GM12878 (cell line): ENCODE measurements at regions of chr4 and their contacts with region 1.

Region 1: GRCh38 chr4:6873792-6874461 is 35.7 kb upstream of the TBC1D14 start:
- DNase-seq: no peak
- ATAC-seq: peak; percentile 96
- H3K4me3 ChIP-seq: no peak overlapping the region
- H3K27ac ChIP-seq: no peak overlapping the region
- H3K4me1 ChIP-seq: no peaks in the 10 kb centered on the region
- H3K27me3 ChIP-seq: no peaks in the 10 kb centered on the region
- CTCF ChIP-seq: peak; percentile 92 to 95 (median 95)
- EP300 ChIP-seq: no peak
- POLR2A ChIP-seq: no peak
- RAD21 ChIP-seq: peak; percentile 96

Region 2: DNA sequence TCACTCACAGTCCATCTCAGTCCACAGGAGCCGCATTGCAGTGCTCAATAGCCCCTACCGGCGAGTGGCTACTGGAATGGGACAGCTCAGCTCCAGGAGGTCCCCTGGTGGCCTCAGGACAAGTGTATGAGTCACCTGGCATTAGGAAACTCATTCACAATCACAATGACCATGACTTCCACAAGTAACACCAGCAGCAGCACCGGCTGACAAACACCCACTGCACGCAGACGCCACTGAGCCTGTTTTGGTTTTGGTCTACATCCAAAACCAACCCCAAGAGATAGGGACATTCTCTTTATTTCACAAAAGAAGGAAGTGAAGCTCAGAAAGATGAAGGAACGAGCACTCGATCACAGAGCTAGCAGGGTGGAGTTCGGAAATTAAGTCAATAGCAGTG is 681.7 kb before region 1 on chr4:
- CTCF ChIA-PET with region 1: no interaction called
- POLR2A ChIA-PET with region 1: no interaction called
- RAD21 ChIA-PET with region 1: no interaction called
- SMC1A ChIA-PET with region 1: no interaction called
- in situ Hi-C with region 1: no loop called
- intact Hi-C with region 1: no loop called
- DNase-seq: no peak
- ATAC-seq: peak; percentile 37
- H3K4me3 ChIP-seq: no peak overlapping the region
- H3K27ac ChIP-seq: peak overlapping the region; percentile 50
- H3K4me1 ChIP-seq: peaks cover 30% of the 10 kb centered on the region
- H3K27me3 ChIP-seq: no peaks in the 10 kb centered on the region
- CTCF ChIP-seq: peak in 1 of 3 experiments; percentile 19; a peak in 1 of 6 replicates
- EP300 ChIP-seq: peak; percentile 39 to 53; a peak in 2 of 4 replicates
- POLR2A ChIP-seq: no peak
- RAD21 ChIP-seq: no peak

Region 3: DNA sequence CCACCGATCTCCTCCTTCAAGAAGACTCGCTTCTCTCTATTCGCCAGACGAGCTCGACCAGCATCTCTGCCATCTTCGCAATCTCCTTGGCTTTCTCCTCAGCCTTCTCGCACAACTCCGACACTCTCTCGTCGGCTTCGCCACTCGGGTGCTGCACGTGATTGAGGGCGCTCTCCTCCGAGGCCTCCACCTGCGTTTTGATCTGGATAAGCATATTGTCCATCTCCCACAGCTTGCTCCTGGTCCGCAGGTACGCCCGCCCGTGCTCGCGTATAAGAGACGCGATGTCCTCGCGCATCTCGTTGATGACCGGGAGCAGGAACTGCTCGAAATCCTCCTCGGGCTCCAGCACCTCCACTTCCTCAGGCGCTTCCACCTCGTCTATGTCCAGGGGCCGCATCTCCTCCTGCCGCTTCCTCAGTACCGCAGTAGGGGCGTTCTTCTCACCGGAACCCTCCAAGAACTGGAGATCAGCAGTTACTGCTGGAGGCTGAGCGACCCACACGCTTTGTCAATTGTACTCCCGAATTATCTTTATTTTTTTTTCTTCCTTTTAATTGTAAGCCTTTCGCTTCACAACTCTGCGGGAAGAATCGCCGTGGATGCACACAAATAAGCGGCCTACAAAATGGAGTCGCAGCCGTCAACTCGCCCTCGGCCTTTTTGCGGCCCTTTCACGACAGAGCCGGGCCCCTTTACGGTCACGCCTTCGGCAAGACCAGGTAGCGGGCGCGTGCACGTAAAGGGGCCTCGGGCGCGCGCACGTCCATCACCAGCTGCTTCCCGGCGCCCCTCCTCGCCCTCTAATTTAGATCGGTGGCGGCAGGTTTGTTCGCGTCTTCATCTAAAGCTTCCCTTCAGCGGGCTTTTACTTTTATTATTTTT is 164.5 kb before region 1 on chr4 and contains the start of gene MRFAP1L1:
- CTCF ChIA-PET with region 1: interaction called, 277 read pairs
- POLR2A ChIA-PET with region 1: interaction called, 3 read pairs
- RAD21 ChIA-PET with region 1: interaction called, 14 read pairs
- SMC1A ChIA-PET with region 1: interaction called, 9 read pairs
- in situ Hi-C with region 1: no loop called
- intact Hi-C with region 1: no loop called
- DNase-seq: peak; percentile 85
- ATAC-seq: peak; percentile 85
- H3K4me3 ChIP-seq: peak within 1 kb of the TSS; percentile 89
- H3K27ac ChIP-seq: peak within 1 kb of the TSS; percentile 81
- H3K4me1 ChIP-seq: peaks cover 14% of the 10 kb centered on the region
- H3K27me3 ChIP-seq: no peaks in the 10 kb centered on the region
- CTCF ChIP-seq: peak in 2 of 3 experiments; percentile 7 to 10; a peak in 1 of 6 replicates
- EP300 ChIP-seq: no peak
- POLR2A ChIP-seq: peak; percentile 80
- RAD21 ChIP-seq: no peak
- polyA plus RNA-seq, gene MRFAP1L1: 30.6 to 34.5 TPM

Region 4: GRCh38 chr4:6732441-6733357 is 141.2 kb before region 1 on chr4:
- CTCF ChIA-PET with region 1: interaction called, 13 read pairs
- POLR2A ChIA-PET with region 1: no interaction called
- RAD21 ChIA-PET with region 1: interaction called, 4 read pairs
- SMC1A ChIA-PET with region 1: interaction called, 10 read pairs
- in situ Hi-C with region 1: no loop called
- intact Hi-C with region 1: no loop called
- DNase-seq: no peak
- ATAC-seq: no peak
- H3K4me3 ChIP-seq: no peak overlapping the region
- H3K27ac ChIP-seq: no peak overlapping the region
- H3K4me1 ChIP-seq: no peaks in the 10 kb centered on the region
- H3K27me3 ChIP-seq: no peaks in the 10 kb centered on the region; a peak in 1 of 4 replicates
- CTCF ChIP-seq: no peak
- EP300 ChIP-seq: no peak
- POLR2A ChIP-seq: no peak
- RAD21 ChIP-seq: no peak

Region 5: DNA sequence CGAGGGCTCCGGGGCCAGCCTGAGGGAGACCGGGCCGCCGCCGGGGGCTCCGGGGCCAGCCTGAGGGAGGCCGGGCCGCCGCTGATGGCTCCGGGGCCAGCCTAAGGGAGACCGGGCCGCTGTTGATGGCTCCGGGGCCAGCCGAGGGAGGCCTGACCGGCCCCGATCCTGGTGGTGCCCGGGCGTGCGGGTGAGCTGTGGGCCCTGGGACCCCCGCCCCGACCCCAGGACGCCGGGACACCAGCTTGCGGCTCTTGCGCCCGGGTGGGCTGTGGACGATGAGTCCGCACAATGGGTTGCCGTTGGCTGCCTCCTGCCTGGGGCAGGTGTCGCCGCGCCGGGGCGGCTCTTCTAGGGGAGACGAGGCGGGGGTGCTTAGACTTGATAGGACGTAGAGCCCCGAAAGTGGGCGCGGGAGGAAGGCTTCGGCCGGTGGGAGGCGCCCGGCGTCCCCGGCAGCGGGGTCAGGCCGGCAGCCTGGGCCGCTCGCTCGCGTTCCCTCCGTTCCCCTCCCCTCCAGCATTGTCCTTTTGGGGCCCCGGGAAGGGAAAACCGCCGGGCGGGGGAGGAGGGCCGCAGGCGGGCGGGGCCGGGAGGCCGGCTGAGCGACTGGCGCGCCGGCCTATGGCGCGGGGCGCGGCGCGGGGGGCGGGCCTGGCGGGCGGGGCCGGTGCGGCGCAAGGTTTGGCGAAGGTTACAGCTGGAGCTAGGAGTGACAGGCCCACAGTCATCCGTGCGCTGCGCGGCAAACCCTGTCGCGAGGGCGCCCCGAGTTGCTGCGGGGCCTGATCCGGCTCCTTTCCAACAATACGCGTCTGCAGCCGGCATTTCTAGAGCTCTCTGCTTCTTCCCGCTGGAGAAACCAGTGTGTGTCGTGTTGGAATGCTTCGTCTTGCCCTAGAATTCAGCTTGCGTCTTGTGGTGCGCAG is 90.6 kb before region 1 on chr4:
- CTCF ChIA-PET with region 1: interaction called, 300 read pairs
- POLR2A ChIA-PET with region 1: interaction called, 3 read pairs
- RAD21 ChIA-PET with region 1: interaction called, 87 read pairs
- SMC1A ChIA-PET with region 1: interaction called, 110 read pairs
- in situ Hi-C with region 1: no loop called
- intact Hi-C with region 1: loop called (anchors 2 kb)
- DNase-seq: peak; percentile 27
- ATAC-seq: peak; percentile 87
- H3K4me3 ChIP-seq: peak overlapping the region; percentile 89
- H3K27ac ChIP-seq: peak overlapping the region; percentile 88
- H3K4me1 ChIP-seq: 0 out of 2 replicates have a peak, but pooled peaks cover 6% of the 10 kb centered on the region
- H3K27me3 ChIP-seq: no peaks in the 10 kb centered on the region
- CTCF ChIP-seq: peak; percentile 19 to 42 (median 25); a peak in 3 of 6 replicates
- EP300 ChIP-seq: no peak
- POLR2A ChIP-seq: peak; percentile 78; the same call in 1 of the 2 replicates
- RAD21 ChIP-seq: peak; percentile 15; the same call in 1 of the 2 replicates

Region 6: GRCh38 chr4:6848717-6849305 is 25.1 kb before region 1 on chr4:
- CTCF ChIA-PET with region 1: interaction called, 15 read pairs
- POLR2A ChIA-PET with region 1: interaction called, 3 read pairs
- RAD21 ChIA-PET with region 1: interaction called, 3 read pairs
- SMC1A ChIA-PET with region 1: interaction called, 10 read pairs
- in situ Hi-C with region 1: no loop called
- intact Hi-C with region 1: no loop called
- DNase-seq: no peak
- ATAC-seq: no peak; the same call in 2 of the 3 replicates
- H3K4me3 ChIP-seq: no peak overlapping the region
- H3K27ac ChIP-seq: no peak overlapping the region
- H3K4me1 ChIP-seq: peaks cover 5% of the 10 kb centered on the region
- H3K27me3 ChIP-seq: no peaks in the 10 kb centered on the region
- CTCF ChIP-seq: no peak
- EP300 ChIP-seq: no peak
- POLR2A ChIP-seq: no peak
- RAD21 ChIP-seq: no peak

Region 7: GRCh38 chr4:6892190-6892908 is 18.4 kb after region 1 on chr4:
- CTCF ChIA-PET with region 1: interaction called, 64 read pairs
- POLR2A ChIA-PET with region 1: no interaction called
- RAD21 ChIA-PET with region 1: interaction called, 13 read pairs
- SMC1A ChIA-PET with region 1: interaction called, 5 read pairs
- in situ Hi-C with region 1: no loop called
- intact Hi-C with region 1: no loop called
- DNase-seq: no peak
- ATAC-seq: peak; percentile 58
- H3K4me3 ChIP-seq: no peak overlapping the region
- H3K27ac ChIP-seq: no peak overlapping the region
- H3K4me1 ChIP-seq: peaks cover 11% of the 10 kb centered on the region
- H3K27me3 ChIP-seq: no peaks in the 10 kb centered on the region
- CTCF ChIP-seq: peak; percentile 1 to 22 (median 18); a peak in 2 of 6 replicates
- EP300 ChIP-seq: no peak
- POLR2A ChIP-seq: no peak
- RAD21 ChIP-seq: peak; percentile 8; the same call in 1 of the 2 replicates

Region 8: DNA sequence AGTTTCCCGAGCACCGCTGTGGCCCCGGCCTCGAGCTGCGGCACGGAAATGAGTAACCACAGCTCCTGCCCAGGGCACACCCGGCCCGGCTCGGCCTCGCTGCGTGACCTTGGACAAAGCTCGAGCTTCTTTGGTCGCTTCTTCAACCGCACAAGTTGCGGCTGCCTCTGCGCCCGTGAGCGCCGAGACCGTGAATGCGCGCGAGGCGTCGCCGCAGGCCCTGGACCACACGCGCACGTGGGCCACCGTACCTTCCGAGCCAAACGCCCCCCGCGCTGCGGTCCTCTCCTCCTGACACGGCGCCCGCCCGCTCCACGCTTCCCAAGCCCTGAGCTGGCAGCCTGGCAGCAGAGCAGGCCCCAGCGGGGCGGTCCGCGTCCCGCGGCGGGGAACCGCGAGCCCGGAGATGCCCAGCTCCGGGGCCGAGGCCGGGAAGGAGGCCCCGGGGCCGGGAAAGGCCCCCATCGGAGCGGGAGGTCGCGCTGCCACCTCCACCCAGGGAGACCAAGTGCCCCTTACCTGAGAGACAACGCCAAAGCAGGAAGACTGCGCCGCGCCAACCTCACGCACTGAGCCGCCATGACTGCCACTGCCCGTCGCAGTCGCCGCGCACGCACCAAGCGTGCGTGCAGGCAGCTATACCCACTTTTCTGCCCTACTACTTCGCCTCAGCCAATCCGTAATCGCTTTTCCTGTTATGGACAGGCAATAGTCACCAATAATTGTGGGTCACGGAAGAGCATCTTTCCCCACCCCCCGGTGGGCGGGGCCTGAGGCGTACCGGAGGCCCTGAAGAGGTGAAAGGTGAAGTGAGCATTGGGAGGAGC is 193.7 kb after region 1 on chr4 and contains the start of gene GRPEL1:
- CTCF ChIA-PET with region 1: interaction called, 22 read pairs
- POLR2A ChIA-PET with region 1: interaction called, 6 read pairs
- RAD21 ChIA-PET with region 1: interaction called, 14 read pairs
- SMC1A ChIA-PET with region 1: interaction called, 5 read pairs
- in situ Hi-C with region 1: no loop called
- intact Hi-C with region 1: no loop called
- DNase-seq: peak; percentile 98
- ATAC-seq: peak; percentile 95
- H3K4me3 ChIP-seq: peak within 1 kb of the TSS; percentile 74
- H3K27ac ChIP-seq: peak within 1 kb of the TSS; percentile 84
- H3K4me1 ChIP-seq: peaks cover 14% of the 10 kb centered on the region
- H3K27me3 ChIP-seq: no peaks in the 10 kb centered on the region; a peak in 1 of 4 replicates
- CTCF ChIP-seq: peak; percentile 5 to 13 (median 7); a peak in 1 of 6 replicates
- EP300 ChIP-seq: no peak
- POLR2A ChIP-seq: peak; percentile 99
- RAD21 ChIP-seq: no peak
- polyA plus RNA-seq, gene GRPEL1: 103 to 119 TPM